Naive thymus-derived CD4-positive, alpha-beta T cell (primary cell): ENCODE measurements at regions of chr6 and their contacts with region 1.

Region 1: GRCh38 chr6:150865406-150866146 is at the start of gene MTHFD1L:
- DNase-seq: peak; percentile 46 to 84 (median 55)
- ATAC-seq: peak; percentile 83
- H3K4me3 ChIP-seq: peak within 1 kb of the TSS; percentile 72
- H3K4me3 Mint-ChIP-seq: peak within 1 kb of the TSS; percentile 83 to 97 (median 88)
- H3K27ac ChIP-seq: peak within 1 kb of the TSS; percentile 61
- H3K27ac Mint-ChIP-seq: peak within 1 kb of the TSS in 8 of 9 donors; percentile 28 to 89 (median 70)
- H3K4me1 ChIP-seq: peaks cover 5 to 6% of the 10 kb centered on the region in 2 donors
- H3K4me1 Mint-ChIP-seq: peaks cover 10 to 44% (median 14%) of the 10 kb centered on the region in 7 donors
- H3K27me3 ChIP-seq: no peaks in the 10 kb centered on the region
- H3K27me3 Mint-ChIP-seq: peaks cover 8 to 18% (median 16%) of the 10 kb centered on the region in 5 donors
- total RNA-seq, gene MTHFD1L: 6.4 to 57.8 (median 9.3) TPM

Region 2: GRCh38 chr6:149941583-149942431 is 923.8 kb before region 1 on chr6 and contains the start of gene ULBP2:
- CTCF ChIA-PET with region 1: no interaction called
- POLR2A ChIA-PET with region 1: no interaction called
- intact Hi-C with region 1: loop called in 1 of 2 experiments (anchors 5 kb)
- DNase-seq: peak; percentile 69 to 94 (median 80)
- ATAC-seq: peak; percentile 94
- H3K4me3 ChIP-seq: peak within 1 kb of the TSS; percentile 58
- H3K4me3 Mint-ChIP-seq: peak within 1 kb of the TSS; percentile 78 to 96 (median 94)
- H3K27ac ChIP-seq: peak within 1 kb of the TSS; percentile 9
- H3K27ac Mint-ChIP-seq: peak within 1 kb of the TSS; percentile 74 to 91 (median 85)
- H3K4me1 ChIP-seq: peaks cover 14 to 20% of the 10 kb centered on the region in 2 donors
- H3K4me1 Mint-ChIP-seq: peaks cover 13 to 40% (median 31%) of the 10 kb centered on the region in 7 donors
- H3K27me3 ChIP-seq: peaks cover 25 to 35% of the 10 kb centered on the region in 2 donors
- H3K27me3 Mint-ChIP-seq: peaks cover 31 to 82% (median 44%) of the 10 kb centered on the region in 5 donors
- total RNA-seq, gene ULBP2: 0.27 to 1.0 (median 0.65) TPM in 4 of 5 experiments, not detected in the other